Calu3 (cell line): ENCODE measurements at regions of chrX and their contacts with region 1.

Region 1: GRCh38 chrX:132488819-132489577 is at the start of gene MBNL3:
- DNase-seq: peak; percentile 69
- H3K4me3 Mint-ChIP-seq: peak within 1 kb of the TSS; percentile 71
- H3K27ac Mint-ChIP-seq: peak within 1 kb of the TSS; percentile 79
- H3K4me1 Mint-ChIP-seq: peaks cover 10% of the 10 kb centered on the region
- H3K27me3 Mint-ChIP-seq: no peaks in the 10 kb centered on the region
- CTCF ChIP-seq: no peak
- total RNA-seq, gene MBNL3: 18.9 and 21.0 TPM in 2 replicates

Region 2: GRCh38 chrX:132532955-132533354 is 44.0 kb after region 1 on chrX:
- CTCF ChIA-PET with region 1: no interaction called
- intact Hi-C with region 1: loop called (anchors 5 kb)
- DNase-seq: peak; percentile 1
- H3K4me3 Mint-ChIP-seq: no peak overlapping the region
- H3K27ac Mint-ChIP-seq: no peak overlapping the region
- H3K4me1 Mint-ChIP-seq: peaks cover 13% of the 10 kb centered on the region
- H3K27me3 Mint-ChIP-seq: no peaks in the 10 kb centered on the region
- CTCF ChIP-seq: no peak

Region 3: DNA sequence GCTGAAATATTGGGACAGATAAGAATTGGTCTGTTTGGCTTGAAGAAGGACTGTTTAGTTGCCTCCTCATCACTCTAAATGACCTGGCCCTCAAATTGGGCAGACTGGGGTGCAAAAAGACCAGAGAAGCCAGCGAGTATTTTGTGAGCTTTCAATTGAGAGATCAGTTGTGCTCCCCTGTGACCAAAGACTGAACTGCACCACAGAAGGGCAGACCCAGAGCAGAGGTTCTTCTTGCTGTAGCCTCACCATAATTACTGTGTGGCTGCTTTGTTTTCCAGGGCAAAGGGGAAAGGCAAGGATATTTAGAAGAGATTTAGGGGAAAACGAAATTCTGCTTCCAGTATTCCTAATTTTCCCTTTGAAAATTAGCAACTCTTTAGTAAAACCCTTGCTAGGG is 103.9 kb after region 1 on chrX:
- CTCF ChIA-PET with region 1: interaction called, 7 read pairs
- intact Hi-C with region 1: loop called (anchors 2 kb)
- DNase-seq: peak; percentile 20
- H3K4me3 Mint-ChIP-seq: no peak overlapping the region
- H3K27ac Mint-ChIP-seq: no peak overlapping the region
- H3K4me1 Mint-ChIP-seq: no peaks in the 10 kb centered on the region
- H3K27me3 Mint-ChIP-seq: no peaks in the 10 kb centered on the region
- CTCF ChIP-seq: peak; percentile 33